Posterior vena cava (tissue), 2 donors: ENCODE measurements at regions of chr3 and their contacts with region 1.

Region 1: GRCh38 chr3:184345317-184346144 is 8.1 kb downstream of the FAM131A start:
- DNase-seq: no peak

Region 2: DNA sequence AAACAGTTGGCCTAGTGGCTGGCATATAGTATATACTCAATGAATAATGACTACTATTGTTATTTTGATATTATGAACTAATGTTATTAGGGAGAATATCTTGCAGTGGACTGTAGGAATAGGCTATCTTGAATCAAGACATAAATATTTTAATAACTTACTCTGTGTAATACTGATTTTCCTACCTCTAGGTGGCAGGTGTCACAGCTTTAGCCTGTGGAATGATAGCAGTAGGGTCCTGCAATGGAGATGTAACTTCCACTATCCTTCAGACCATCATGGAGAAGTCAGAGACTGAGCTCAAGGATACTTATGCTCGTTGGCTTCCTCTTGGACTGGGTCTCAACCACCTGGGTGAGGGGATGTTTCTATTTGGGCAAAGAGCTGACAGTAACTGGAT is 40.0 kb before region 1 on chr3:
- intact Hi-C with region 1: loop called in 1 of 2 experiments (anchors 5 kb)
- DNase-seq: no peak

Region 3: GRCh38 chr3:184405075-184406030 is 59.8 kb after region 1 on chr3:
- intact Hi-C with region 1: no loop called
- DNase-seq: peak; percentile 41

Region 4: DNA sequence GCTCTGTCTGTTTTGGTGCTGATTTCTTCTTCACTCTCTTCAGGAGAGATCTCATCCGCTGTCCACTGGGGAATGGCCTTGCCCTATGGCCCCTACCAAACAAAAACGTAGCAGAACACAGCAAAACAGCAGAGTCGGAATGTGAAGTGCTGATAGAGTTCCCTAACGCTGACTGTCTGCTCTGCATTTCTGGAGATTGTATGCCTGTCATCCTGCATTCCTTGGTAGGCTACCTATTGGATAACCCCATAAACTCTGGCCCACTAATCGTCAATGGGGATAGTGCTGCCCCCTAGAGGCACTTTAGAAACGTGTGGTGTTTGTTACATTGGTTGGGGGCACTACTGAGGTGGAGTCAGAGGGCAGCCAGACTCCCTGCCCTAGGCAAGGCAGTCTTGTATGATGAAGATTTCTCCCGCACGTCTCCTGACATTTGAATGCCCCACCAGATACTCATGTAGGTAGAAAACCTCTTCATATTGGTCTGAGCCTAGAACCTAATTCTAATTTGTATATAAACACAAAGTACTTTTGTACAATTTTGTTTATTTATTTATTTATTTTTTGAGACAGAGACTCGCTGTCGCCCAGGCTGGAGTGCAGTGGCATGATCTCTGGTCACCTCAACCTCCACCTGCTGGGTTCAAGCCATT is 382.0 kb after region 1 on chr3:
- intact Hi-C with region 1: no loop called
- DNase-seq: peak; percentile 62